ENCODE measurements at regions of chr4 and their contacts with region 1.

Region 1: DNA sequence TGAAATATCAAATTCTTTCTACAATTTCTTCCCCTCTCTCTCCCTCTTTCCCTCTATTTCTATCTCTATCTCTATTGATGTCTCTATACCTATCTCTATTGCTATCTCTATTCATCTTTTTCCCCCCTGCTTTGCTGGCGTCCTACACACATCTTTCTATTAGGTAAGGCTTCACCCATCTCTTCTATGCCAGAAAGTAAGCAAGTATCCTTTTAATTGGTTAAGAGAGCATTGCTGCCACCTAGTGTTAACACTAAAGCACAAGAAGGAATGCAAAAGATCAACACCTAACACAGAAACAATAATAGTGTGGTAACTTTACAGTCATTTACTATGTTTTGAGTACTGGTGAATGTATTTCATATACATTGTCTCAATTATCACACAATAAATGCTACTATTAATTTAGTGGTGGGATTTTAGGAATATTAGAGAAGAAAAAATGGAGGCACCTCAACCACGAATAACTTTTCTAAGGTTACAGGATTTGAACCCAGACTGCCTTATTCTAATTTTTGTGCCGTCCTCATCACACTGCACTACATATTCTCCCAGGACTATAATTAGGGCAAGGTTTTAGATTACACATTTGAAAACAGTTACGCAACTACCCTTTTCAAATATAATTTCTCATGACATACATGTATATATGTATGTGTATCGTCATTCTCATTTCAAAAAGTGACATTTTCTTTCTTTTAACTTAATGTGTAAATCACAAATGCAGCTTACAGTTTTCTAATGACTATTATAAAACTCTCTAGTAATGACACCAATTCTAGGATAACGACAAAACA is 3.7 kb upstream of the C4orf36 start:
- DNase-seq: no peak
- ATAC-seq: peak; percentile 29 to 42
- H3K4me3 ChIP-seq: no peak overlapping the region
- H3K27ac ChIP-seq: no peak overlapping the region
- H3K4me1 ChIP-seq: no peaks in the 10 kb centered on the region
- H3K27me3 ChIP-seq: no peaks in the 10 kb centered on the region

Region 2: DNA sequence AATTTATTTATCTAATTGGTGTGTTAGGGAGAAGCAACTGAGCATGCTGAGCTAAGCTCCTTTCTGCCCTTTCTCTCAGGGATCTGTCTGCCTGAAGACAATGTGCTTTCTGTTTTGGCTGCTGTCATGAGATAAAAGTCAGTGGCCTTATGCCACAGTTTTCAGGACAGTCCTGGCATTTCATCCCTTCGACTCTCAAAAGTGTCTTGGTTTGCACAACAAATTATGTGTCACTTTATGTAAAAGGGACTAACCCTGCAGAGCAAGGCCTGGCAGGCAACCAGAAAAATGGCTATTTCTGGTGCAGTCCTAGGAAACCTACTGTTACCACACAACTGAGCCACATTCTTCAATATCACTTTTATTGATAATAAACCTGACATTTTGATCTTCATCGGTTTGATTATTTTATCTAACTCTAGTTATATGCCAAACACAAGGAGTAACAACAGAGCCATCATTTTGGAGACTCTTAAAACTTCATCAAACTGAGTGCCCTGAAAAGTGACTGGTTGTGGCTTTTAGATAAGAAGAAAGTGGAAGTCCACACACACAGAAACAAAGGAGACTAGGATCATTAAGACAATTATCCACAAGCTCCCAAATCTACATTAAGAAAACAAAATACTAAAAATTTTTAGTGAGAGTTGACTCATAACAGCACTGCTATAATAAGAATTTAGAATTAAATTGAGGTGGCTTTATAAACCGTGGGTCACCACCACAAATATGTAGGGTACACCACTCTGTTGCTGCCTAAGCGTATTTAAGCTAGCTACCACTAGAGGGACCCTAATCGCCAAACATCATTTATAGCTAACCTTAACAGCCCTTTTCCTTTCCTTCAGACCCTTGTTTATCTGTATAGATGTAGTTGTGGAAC is 397.7 kb before region 1 on chr4:
- intact Hi-C with region 1: loop called (anchors 2 to 5 kb)
- DNase-seq: peak; percentile 36 to 66 (median 42)
- ATAC-seq: peak; percentile 88 to 91
- H3K4me3 ChIP-seq: no peak overlapping the region
- H3K27ac ChIP-seq: no peak overlapping the region
- H3K4me1 ChIP-seq: peaks cover 9% of the 10 kb centered on the region
- H3K27me3 ChIP-seq: no peaks in the 10 kb centered on the region

Region 3: GRCh38 chr4:86870442-86871069 is 25.3 kb before region 1 on chr4:
- intact Hi-C with region 1: no loop called
- DNase-seq: no peak
- ATAC-seq: no peak
- H3K4me3 ChIP-seq: no peak overlapping the region
- H3K27ac ChIP-seq: no peak overlapping the region
- H3K4me1 ChIP-seq: no peaks in the 10 kb centered on the region
- H3K27me3 ChIP-seq: no peaks in the 10 kb centered on the region

Region 4: DNA sequence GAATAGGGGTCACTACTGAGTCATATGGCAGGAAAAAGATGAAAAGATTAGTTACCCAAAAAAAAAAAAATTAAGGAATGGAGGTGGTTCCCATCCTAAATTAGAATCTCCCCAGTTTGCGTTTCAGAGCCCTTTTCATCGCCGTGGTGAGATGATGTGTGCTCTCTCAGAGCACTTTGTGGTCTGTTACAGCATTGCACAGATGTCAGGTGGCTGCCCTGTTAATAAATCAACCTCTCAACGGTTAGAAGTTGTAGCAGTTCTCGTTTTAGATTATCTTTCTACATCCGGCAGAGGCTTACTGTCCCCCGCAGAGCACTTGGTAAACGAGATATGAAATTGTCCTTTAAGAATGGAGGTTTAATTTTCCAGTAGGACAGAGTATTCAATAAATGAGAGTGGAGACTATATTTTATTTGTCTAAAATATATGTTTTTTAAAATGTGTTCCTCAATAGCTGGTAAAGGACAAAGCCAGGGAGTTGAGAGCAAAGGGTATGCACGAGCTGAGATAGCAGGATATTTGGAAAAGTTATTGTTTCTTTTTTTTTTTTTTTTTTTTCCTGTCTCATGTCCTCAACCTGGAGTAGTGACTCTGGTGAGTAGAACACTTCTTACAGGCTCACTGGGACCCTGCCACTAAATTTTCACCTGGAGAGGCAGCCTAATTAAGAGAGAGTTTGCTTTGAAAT is 65.9 kb after region 1 on chr4:
- intact Hi-C with region 1: no loop called
- DNase-seq: no peak
- ATAC-seq: peak; percentile 44 to 78
- H3K4me3 ChIP-seq: no peak overlapping the region
- H3K27ac ChIP-seq: no peak overlapping the region
- H3K4me1 ChIP-seq: peaks cover 11% of the 10 kb centered on the region
- H3K27me3 ChIP-seq: no peaks in the 10 kb centered on the region

Measured in right cardiac atrium (tissue), 5 donors.